GM23248 (cell line): ENCODE measurements at regions of chr3 and their contacts with region 1.

Region 1: DNA sequence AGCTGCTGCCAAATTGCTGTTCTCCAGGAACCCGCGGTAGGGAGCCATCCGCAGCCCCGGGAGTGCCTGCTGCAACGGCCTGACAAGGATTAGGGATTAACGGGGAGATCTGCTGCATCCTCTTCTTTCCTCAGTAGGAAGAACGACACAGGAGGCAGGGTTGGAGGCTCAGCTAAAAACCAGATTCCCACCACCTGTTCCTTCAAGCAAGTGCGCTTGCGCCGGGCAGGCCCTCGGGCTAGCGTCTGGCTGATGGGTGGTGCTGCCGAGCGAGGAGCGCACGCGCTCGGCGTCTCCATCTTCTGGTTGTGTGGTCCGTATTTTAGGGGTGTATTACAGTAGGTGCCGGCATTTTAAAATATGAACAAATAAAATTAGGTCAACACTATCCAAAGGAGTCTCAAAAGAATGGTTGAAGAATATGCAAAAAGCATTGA is 25.4 kb upstream of the SLC25A26 start:
- DNase-seq: peak; percentile 76
- H3K4me3 ChIP-seq: peak overlapping the region; percentile 63
- H3K27ac ChIP-seq: no peak overlapping the region
- H3K4me1 ChIP-seq: no peaks in the 10 kb centered on the region
- H3K27me3 ChIP-seq: 0 out of 2 replicates have a peak, but pooled peaks cover under 1% of the 10 kb centered on the region

Region 2: GRCh38 chr3:64501298-64501906 is 1694.0 kb before region 1 on chr3:
- in situ Hi-C with region 1: loop called (anchors 25 kb)
- DNase-seq: no peak
- H3K4me3 ChIP-seq: no peak overlapping the region
- H3K27ac ChIP-seq: no peak overlapping the region
- H3K4me1 ChIP-seq: no peaks in the 10 kb centered on the region
- H3K27me3 ChIP-seq: no peaks in the 10 kb centered on the region

Region 3: DNA sequence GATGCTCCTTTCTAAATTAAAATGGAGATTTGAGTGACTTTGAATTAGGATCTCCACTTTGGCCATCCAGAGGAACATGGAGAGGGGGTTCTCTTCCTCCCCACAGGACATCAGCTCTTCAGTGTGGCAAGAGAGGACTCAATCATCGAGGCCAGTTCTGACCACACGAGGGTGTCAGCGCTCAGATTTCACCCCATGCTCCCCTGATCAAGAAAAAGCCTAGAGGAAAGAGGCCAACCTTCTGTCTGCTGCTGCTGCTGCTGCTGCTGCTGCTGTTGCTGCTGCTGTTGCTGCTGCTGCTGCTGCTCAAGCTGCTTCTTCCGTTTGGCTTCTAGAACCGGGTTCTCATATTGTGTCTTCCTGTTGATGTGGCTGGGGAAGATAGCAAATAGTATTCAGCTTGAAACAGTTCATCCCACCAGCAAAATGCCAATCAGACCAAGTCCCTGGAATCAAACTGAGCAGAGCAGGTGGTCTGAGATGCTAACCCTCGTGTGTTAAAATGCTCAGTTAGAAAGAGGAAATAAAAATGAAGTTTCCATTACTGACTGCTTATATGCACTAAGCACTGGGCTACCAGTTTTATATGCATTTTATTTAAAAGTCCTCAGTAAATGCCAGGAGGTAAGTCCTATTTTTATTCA is 755.6 kb before region 1 on chr3:
- in situ Hi-C with region 1: loop called (anchors 25 kb)
- DNase-seq: peak; percentile 70
- H3K4me3 ChIP-seq: no peak overlapping the region
- H3K27ac ChIP-seq: no peak overlapping the region
- H3K4me1 ChIP-seq: no peaks in the 10 kb centered on the region
- H3K27me3 ChIP-seq: no peaks in the 10 kb centered on the region

Region 4: DNA sequence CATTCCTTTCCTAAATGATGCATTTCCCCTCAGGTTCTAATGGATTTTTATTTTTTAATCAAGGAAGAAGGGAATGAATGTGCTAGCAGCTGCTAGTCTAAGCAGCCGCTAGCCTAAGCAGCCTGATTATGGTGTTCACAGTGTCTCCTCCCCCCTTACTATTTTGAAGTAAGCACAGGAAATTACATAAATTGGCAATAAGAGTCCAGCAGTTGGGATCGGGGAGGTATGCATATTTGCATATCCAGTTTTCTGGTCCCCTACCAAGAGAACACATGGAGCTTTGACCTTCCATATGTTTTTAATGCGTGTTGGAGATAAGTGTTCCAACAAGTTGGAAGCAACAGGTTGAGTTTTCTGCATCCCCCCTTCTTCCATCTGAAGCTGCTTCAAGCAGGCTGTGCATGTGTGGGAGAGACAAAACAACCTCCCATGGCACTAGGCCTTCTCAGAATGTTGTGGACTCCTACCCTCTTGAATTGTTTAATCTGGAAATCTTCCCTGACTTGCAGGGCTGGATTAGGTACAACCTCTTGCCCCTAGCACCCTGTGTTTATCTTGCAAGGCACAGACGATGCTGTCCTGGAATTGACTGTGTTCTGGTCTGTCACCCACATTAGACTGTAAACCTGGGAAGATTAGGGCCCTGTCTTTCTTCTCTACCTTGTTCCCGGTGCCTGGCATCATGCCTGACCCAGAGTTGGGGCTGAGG is 430.3 kb after region 1 on chr3:
- in situ Hi-C with region 1: no loop called
- DNase-seq: no peak
- H3K4me3 ChIP-seq: no peak overlapping the region
- H3K27ac ChIP-seq: no peak overlapping the region
- H3K4me1 ChIP-seq: no peaks in the 10 kb centered on the region
- H3K27me3 ChIP-seq: no peaks in the 10 kb centered on the region